ENCODE measurements at regions of chr1 and their contacts with region 1.

Region 1: DNA sequence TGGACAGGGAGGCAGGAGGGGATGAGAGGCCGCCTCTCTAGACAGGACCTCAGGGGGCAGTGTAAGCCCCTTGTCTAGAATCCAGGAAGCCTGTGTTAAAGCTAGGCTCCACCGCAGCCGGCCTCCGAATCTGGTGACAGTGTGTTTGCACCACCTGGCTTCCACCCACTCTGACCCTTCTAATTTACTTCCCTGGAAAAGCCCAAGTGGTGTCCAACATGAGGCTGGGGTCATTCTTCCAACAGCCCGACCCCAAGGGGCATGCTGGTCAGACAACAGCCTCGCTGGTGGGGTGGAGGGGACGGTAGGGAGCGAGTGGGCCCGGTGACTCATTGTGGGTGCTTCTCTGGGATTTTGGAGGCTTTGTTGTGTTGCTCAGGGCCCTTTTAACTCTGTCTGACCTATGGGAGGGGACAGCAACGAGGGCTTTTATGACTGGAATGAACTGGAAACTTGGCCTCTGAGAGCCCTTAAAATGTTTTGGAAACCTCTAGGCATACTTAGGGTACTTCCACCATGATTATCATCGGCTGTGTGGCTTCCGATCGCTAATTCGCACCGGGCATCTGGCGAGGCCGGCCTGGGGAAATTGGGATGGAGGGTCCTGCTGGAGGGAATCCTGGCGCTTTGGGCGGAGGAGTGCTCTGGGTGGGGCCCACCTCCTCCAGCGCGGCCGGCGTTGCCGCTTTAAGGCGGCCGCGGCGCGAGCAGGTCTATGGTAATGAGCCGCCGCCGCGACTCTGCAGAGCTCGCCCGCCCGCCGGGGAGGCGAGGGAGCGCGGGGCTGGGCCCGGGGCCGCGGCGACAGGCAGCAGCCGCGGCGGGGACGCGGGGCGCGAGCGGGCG is at the start of gene CELSR2:
- DNase-seq: no peak
- H3K4me3 ChIP-seq: peak within 1 kb of the TSS; percentile 74 to 89 (median 76)
- H3K27ac ChIP-seq: peak within 1 kb of the TSS; percentile 63 to 69 (median 66)
- H3K4me1 ChIP-seq: peaks cover 14 to 47% (median 32%) of the 10 kb centered on the region in 4 donors
- H3K27me3 ChIP-seq: no peaks in the 10 kb centered on the region
- CTCF ChIP-seq: no peak
- EP300 ChIP-seq: no peak
- POLR2A ChIP-seq: no peak
- total RNA-seq, gene CELSR2: 7.8 to 20.4 (median 10.5) TPM

Region 2: DNA sequence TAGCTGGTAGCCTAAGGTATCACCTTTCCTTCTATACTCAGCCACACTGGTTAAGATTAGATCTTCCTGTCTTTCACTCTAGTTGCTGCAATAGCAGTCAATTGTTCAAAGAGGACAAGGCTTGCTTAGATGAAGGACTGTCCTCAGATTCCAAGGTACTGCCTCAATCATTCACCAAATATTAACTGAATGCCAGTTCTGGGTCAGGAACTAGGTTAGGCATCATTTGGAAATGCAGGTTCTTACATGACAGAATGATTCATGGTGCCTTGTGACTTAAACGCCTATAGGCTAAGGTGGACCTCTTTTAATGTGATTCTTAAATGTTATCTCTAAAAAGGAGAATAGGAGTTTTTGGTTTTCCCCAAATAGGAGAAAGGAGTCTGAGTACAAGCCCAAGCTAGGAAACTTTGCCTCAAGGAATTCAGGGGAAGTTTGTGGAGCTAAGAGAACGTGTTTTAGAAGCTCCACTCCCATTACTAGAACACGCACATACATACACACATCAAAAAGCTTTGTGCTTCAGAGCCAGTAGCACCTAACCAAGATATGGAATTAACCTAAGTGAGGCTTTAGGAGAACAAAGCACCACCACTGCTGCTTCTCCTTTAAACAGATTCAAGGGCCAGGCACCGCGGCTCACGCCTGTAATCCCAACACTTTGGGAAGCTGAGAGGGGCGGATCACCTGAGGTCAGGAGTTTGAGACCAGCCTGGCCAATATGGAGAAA is 198.6 kb before region 1 on chr1:
- intact Hi-C with region 1: no loop called
- DNase-seq: no peak
- H3K4me3 ChIP-seq: no peak overlapping the region
- H3K27ac ChIP-seq: no peak overlapping the region
- H3K4me1 ChIP-seq: no peaks in the 10 kb centered on the region
- H3K27me3 ChIP-seq: no peaks in the 10 kb centered on the region
- CTCF ChIP-seq: no peak
- EP300 ChIP-seq: no peak
- POLR2A ChIP-seq: no peak

Region 3: DNA sequence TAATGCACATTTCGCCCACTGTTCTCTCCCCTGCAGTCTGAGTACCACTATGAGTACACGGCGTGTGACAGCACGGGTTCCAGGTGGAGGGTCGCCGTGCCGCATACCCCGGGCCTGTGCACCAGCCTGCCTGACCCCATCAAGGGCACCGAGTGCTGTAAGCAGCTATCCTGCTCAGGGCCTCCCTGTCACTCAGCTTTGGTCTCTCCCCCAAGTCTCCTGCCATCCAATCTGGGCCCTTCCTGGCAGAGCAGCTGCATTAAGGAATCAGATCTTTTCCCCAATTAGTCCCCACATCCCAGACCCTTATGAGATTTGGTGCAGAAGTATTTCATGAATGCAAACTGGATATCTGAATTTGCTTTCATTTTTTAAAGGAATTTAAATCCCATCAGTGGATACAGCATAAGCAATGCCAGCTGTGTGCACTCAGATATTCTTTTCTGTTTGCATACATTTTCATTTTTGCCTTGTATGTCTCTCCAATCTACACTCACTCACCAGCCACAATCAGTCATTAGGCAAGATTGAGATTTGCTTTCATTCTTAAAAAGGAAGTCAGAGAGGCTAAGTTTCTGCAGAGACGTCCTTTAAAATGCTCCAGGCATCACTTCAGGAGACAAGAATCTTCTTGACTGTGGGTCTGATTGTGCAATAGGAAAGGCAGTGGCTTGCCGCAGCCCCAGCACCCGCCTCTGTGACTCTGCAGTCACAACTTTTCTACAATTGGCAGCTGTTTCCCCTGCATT is 87.0 kb before region 1 on chr1:
- intact Hi-C with region 1: no loop called
- DNase-seq: no peak
- H3K4me3 ChIP-seq: peak overlapping the region in 1 of 4 donors; percentile 11
- H3K27ac ChIP-seq: peak overlapping the region; percentile 11 to 44 (median 22)
- H3K4me1 ChIP-seq: peaks cover 7 to 16% (median 15%) of the 10 kb centered on the region in 4 donors
- H3K27me3 ChIP-seq: no peaks in the 10 kb centered on the region
- CTCF ChIP-seq: no peak
- EP300 ChIP-seq: no peak
- POLR2A ChIP-seq: no peak

Region 4: GRCh38 chr1:109197163-109198042 is 51.6 kb before region 1 on chr1:
- intact Hi-C with region 1: loop called (anchors 5 kb)
- DNase-seq: no peak
- H3K4me3 ChIP-seq: no peak overlapping the region
- H3K27ac ChIP-seq: peak overlapping the region in 2 of 4 donors; percentile 28 to 58
- H3K4me1 ChIP-seq: peaks cover 6 to 19% (median 14%) of the 10 kb centered on the region in 4 donors
- H3K27me3 ChIP-seq: no peaks in the 10 kb centered on the region
- CTCF ChIP-seq: no peak
- EP300 ChIP-seq: no peak
- POLR2A ChIP-seq: no peak

Region 5: GRCh38 chr1:109312978-109313775 is 64.2 kb after region 1 on chr1:
- intact Hi-C with region 1: no loop called
- DNase-seq: no peak
- H3K4me3 ChIP-seq: no peak overlapping the region
- H3K27ac ChIP-seq: peak overlapping the region in 1 of 4 donors; percentile 27
- H3K4me1 ChIP-seq: peaks cover 0 to 47% (median 29%) of the 10 kb centered on the region in 4 donors
- H3K27me3 ChIP-seq: no peaks in the 10 kb centered on the region
- CTCF ChIP-seq: no peak
- EP300 ChIP-seq: no peak
- POLR2A ChIP-seq: no peak

Measured in esophagus muscularis mucosa (tissue), 4 donors.